CD14-positive monocyte (primary cell): ENCODE measurements at regions of chr16 and their contacts with region 1.

Region 1: GRCh38 chr16:50210266-50211038 is 55.9 kb upstream of the ADCY7 start:
- DNase-seq: peak; percentile 13 to 25 (median 24)
- H3K4me3 ChIP-seq: peak overlapping the region in 1 of 3 experiments; percentile 55
- H3K4me3 Mint-ChIP-seq: peak overlapping the region; percentile 35 to 75
- H3K27ac ChIP-seq: peak overlapping the region; percentile 59 to 79
- H3K27ac Mint-ChIP-seq: peak overlapping the region; percentile 52 to 92 (median 89)
- H3K4me1 ChIP-seq: peaks cover 36 to 39% of the 10 kb centered on the region in 2 donors
- H3K4me1 Mint-ChIP-seq: peaks cover 38% of the 10 kb centered on the region
- H3K27me3 ChIP-seq: no peaks in the 10 kb centered on the region
- H3K27me3 Mint-ChIP-seq: no peaks in the 10 kb centered on the region
- CTCF ChIP-seq: peak; percentile 56

Region 2: DNA sequence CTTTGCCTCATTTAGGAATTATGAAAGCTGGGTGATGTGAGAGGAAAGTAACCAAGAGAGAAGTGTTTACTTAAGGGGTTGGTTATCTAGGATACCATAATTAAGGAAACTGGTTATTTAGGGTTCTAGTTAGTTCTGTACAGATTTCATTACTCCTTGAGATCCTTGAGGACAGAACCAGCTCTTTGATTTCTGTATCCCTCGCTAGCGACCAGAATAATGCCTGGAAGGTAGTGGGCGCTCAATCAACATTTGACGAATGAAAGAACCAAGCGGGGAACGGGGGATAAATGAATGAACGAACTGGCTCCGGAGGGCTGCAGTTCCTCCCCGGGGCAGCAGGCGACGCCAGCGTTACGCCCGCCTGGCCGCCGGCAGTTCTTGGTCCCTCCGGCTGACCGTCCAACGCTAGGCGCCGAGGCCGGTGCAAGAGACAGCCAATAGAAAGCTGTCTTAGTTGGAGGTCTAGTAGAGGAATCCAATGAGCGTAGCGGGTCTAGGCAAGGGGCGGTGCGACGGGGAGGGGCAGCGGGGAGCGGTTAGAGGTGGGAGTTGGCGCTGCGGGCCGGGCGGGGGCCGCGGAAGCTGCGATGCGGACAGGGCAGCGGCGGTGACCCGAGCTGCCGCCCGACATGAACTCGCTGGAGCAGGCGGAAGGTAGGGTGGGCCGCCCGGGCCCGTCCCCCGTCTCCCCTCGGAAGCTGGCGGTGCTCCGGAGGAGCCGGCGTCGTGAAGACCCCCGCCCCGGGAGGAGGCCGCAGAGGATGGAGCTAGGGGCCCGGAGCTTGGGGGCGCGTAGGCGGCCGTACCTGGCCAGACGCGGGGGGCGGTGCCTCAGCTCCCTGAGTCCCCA is 185.5 kb before region 1 on chr16 and contains the start of gene CNEP1R1:
- intact Hi-C with region 1: loop called in 1 of 2 experiments (anchors 1 kb)
- DNase-seq: peak; percentile 96 to 97 (median 96)
- H3K4me3 ChIP-seq: peak within 1 kb of the TSS; percentile 65 to 95 (median 92)
- H3K4me3 Mint-ChIP-seq: peak within 1 kb of the TSS; percentile 94 to 98
- H3K27ac ChIP-seq: peak within 1 kb of the TSS; percentile 43 to 87
- H3K27ac Mint-ChIP-seq: peak within 1 kb of the TSS; percentile 81 to 94 (median 91)
- H3K4me1 ChIP-seq: peaks cover 12 to 24% of the 10 kb centered on the region in 2 donors
- H3K4me1 Mint-ChIP-seq: peaks cover 31% of the 10 kb centered on the region
- H3K27me3 ChIP-seq: no peaks in the 10 kb centered on the region
- H3K27me3 Mint-ChIP-seq: peaks cover 0 to 5% (median 0%) of the 10 kb centered on the region in 3 donors
- CTCF ChIP-seq: peak; percentile 99
- polyA plus RNA-seq, gene CNEP1R1: 13.7 to 49.6 (median 19.3) TPM

Region 3: GRCh38 chr16:50065624-50066481 is 144.6 kb before region 1 on chr16 and contains the start of gene HEATR3:
- intact Hi-C with region 1: loop called in 1 of 2 experiments (anchors 5 kb)
- DNase-seq: peak; percentile 89 to 96 (median 91)
- H3K4me3 ChIP-seq: peak within 1 kb of the TSS; percentile 51 to 96 (median 93)
- H3K4me3 Mint-ChIP-seq: peak within 1 kb of the TSS; percentile 92 to 94
- H3K27ac ChIP-seq: peak within 1 kb of the TSS; percentile 66 to 87
- H3K27ac Mint-ChIP-seq: peak within 1 kb of the TSS; percentile 89 to 97 (median 95)
- H3K4me1 ChIP-seq: peaks cover 26% of the 10 kb centered on the region in 2 donors
- H3K4me1 Mint-ChIP-seq: peaks cover 35% of the 10 kb centered on the region
- H3K27me3 ChIP-seq: no peaks in the 10 kb centered on the region
- H3K27me3 Mint-ChIP-seq: peaks cover 0 to 2% (median 1%) of the 10 kb centered on the region in 3 donors
- CTCF ChIP-seq: no peak
- polyA plus RNA-seq, gene HEATR3: 10.4 to 40.6 (median 10.7) TPM

Region 4: DNA sequence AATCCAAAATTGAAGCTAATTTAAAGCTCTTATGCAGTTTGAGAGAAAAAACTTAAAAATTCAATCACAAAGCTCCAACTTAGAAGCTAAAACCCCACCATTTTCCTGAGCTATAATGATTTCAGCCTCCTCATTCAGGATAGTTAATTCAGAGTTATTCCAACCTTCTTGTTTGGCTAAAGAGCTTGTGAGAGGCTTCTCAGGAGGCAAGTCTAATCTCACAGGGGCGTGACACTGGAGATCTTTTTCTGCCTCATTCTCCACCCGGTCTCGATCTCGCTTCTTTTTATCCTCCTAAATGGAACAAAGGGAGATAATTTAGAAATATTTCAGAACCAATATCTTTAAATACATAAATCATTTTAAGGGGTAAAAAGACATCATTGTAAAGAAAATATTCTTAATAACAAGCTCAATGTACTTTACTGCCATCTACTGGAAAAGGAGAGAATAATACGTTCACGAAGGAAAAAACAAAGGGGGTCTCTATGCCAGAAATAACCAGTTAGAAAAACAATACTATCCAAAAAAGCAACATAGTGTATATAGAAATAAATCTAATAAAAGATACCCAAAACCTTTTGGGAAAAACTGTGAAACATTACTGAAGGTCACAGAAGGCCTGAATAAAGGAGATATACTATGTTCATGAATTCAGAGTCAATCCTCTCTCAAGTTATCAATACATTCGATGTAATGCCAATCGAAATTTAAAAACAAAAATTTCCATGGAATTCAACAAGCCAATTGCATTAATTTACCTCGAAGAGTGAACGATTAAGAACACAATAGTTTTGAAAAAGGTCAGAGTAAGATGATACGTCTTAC is 144.4 kb after region 1 on chr16:
- intact Hi-C with region 1: loop called (anchors 5 to 10 kb)
- DNase-seq: peak in 1 of 3 donors; percentile 41
- H3K4me3 ChIP-seq: no peak overlapping the region
- H3K4me3 Mint-ChIP-seq: no peak overlapping the region
- H3K27ac ChIP-seq: peak overlapping the region in 1 of 2 donors; percentile 39
- H3K27ac Mint-ChIP-seq: peak overlapping the region in 1 of 7 donors; percentile 43
- H3K4me1 ChIP-seq: no peaks in the 10 kb centered on the region
- H3K4me1 Mint-ChIP-seq: peaks cover 4% of the 10 kb centered on the region
- H3K27me3 ChIP-seq: no peaks in the 10 kb centered on the region
- H3K27me3 Mint-ChIP-seq: no peaks in the 10 kb centered on the region
- CTCF ChIP-seq: peak; percentile 94

Region 5: DNA sequence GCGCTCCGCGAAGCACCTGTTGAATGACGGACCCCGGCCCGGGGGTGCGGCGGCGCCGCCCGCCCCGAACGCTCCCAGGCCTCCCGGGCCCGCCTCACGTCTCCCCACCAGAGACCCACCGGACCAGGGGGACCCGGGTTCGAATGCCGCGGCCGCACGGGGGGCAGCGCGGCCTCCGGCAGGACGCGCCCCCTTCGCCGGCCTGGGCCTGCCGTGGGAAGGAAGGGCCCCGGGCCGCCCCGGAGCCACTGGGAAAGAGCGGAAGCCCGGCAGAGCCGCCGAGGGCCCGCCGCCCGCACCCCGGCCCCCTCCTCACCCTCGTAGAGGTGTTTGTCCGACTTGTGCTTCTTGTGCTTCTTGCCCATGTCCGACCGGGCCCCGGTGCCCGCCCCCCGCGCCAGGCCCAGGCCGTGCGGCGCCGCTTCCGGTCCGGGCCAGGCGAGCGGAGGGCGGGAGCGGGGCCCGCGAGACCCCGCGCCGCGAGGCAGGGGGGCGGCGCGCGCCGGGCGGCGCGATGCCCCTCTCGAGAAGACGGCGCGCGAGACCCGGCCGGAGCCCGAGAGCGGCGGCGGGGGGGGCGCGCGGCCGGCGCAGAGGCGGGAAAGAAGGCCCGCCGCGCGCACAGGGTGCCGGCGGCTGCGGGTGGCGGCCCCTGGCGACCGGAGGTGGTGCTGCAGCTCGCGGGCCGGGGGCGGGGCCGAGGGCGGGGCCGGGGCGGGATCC is 158.1 kb after region 1 on chr16 and contains the start of gene BRD7:
- intact Hi-C with region 1: loop called (anchors 5 to 10 kb)
- DNase-seq: peak; percentile 34 to 59 (median 44)
- H3K4me3 ChIP-seq: peak within 1 kb of the TSS; percentile 49 to 95 (median 85)
- H3K4me3 Mint-ChIP-seq: peak within 1 kb of the TSS; percentile 89 to 92
- H3K27ac ChIP-seq: peak within 1 kb of the TSS in 1 of 2 donors; percentile 69
- H3K27ac Mint-ChIP-seq: peak within 1 kb of the TSS; percentile 74 to 95 (median 86)
- H3K4me1 ChIP-seq: peaks cover 32 to 34% of the 10 kb centered on the region in 2 donors
- H3K4me1 Mint-ChIP-seq: peaks cover 37% of the 10 kb centered on the region
- H3K27me3 ChIP-seq: no peaks in the 10 kb centered on the region
- H3K27me3 Mint-ChIP-seq: peaks cover 1 to 6% (median 3%) of the 10 kb centered on the region in 3 donors
- CTCF ChIP-seq: no peak
- polyA plus RNA-seq, gene BRD7: 11.4 to 33.0 (median 21.2) TPM

Region 6: GRCh38 chr16:50520451-50521245 is 310.2 kb after region 1 on chr16:
- intact Hi-C with region 1: no loop called
- DNase-seq: no peak
- H3K4me3 ChIP-seq: no peak overlapping the region
- H3K4me3 Mint-ChIP-seq: no peak overlapping the region
- H3K27ac ChIP-seq: no peak overlapping the region
- H3K27ac Mint-ChIP-seq: no peak overlapping the region
- H3K4me1 ChIP-seq: no peaks in the 10 kb centered on the region
- H3K4me1 Mint-ChIP-seq: no peaks in the 10 kb centered on the region
- H3K27me3 ChIP-seq: no peaks in the 10 kb centered on the region
- H3K27me3 Mint-ChIP-seq: peaks cover 8 to 16% (median 15%) of the 10 kb centered on the region in 3 donors
- CTCF ChIP-seq: no peak

Region 7: GRCh38 chr16:50665128-50665878 is 454.9 kb after region 1 on chr16:
- intact Hi-C with region 1: loop called in 1 of 2 experiments (anchors 5 kb)
- DNase-seq: peak; percentile 68 to 80 (median 72)
- H3K4me3 ChIP-seq: peak overlapping the region; percentile 65 to 83 (median 66)
- H3K4me3 Mint-ChIP-seq: peak overlapping the region; percentile 88 to 91
- H3K27ac ChIP-seq: peak overlapping the region; percentile 55 to 82
- H3K27ac Mint-ChIP-seq: peak overlapping the region; percentile 88 to 95 (median 91)
- H3K4me1 ChIP-seq: peaks cover 31 to 46% of the 10 kb centered on the region in 2 donors
- H3K4me1 Mint-ChIP-seq: peaks cover 41% of the 10 kb centered on the region
- H3K27me3 ChIP-seq: no peaks in the 10 kb centered on the region
- H3K27me3 Mint-ChIP-seq: peaks cover 0 to 2% (median 1%) of the 10 kb centered on the region in 3 donors
- CTCF ChIP-seq: peak; percentile 94